Esophagus muscularis mucosa (tissue), 4 donors: ENCODE measurements at regions of chr16 and their contacts with region 1.

Region 1: DNA sequence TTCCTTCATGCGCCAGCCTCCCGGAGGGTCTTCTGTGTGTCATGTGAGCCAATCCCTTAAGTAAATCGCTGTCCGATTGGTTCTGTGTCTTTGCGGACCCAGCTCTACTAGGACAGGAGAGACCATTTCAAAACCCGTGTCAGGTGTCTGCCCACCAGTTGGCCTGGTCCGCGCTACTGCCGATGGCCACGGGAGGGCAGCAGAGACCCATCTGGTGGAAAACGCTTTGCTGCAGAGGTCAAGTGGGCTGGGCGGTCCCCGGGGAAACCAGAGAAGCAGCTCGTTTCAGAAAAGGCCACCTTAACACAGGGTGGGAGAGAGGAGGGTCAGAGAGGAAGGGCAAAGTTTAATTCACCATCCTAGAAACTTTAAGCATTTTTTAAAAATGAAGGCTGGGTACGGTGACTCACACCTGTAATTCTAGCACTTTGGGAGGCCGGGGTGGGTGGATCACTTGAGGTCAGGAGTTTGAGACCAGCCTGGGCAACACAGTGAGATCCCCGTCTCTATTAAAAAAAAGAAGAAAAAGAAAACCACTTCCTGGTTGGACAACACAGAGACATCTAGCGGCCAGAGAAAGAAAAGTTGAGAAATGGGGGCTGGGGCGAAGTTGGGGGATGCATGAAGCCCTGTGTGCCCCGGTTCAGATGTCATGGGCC is 2.8 kb upstream of the CIBAR2 start:
- DNase-seq: peak; percentile 97
- H3K4me3 ChIP-seq: peak overlapping the region; percentile 20 to 28 (median 27)
- H3K27ac ChIP-seq: peak overlapping the region in 2 of 4 donors; percentile 45 to 59
- H3K4me1 ChIP-seq: peaks cover 8 to 11% (median 10%) of the 10 kb centered on the region in 4 donors
- H3K27me3 ChIP-seq: no peaks in the 10 kb centered on the region
- CTCF ChIP-seq: peak; percentile 92 to 98 (median 93)
- EP300 ChIP-seq: no peak
- POLR2A ChIP-seq: no peak

Region 2: DNA sequence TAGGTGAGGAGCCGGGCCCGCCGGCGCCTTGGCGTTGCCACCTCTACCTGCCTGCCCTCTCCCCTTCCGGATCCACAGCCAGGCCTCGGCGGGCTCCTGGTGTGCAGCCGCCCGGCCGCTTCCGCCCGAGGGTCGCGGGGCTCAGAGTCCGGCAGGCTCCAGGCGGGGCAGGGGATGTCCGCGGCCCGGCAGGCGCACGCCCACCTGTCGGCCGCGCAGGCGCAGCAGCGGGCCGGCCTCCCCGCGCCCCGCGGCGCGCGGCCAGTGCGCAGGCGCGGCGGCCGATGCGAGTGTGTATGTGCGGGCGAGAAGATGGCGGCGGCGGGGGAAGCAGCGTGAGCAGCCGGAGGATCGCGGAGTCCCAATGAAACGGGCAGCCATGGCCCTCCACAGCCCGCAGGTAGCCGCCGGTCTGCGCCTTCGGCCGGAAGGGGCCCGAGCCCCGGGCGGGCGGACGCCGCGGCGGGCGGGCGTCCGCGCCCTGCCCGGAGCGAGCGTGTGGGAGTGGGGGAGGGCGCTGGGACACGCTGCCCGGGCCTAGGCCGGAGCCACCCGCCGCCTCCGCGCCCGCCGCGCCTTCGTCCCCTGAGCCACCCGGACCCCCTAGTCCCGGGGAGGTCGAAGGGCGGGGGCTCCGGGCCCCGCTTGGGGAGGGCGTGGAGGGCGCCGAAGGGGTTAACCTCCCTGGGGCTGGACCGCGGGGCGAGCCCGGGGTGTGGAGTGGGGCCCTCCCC is 415.2 kb before region 1 on chr16 and contains the start of gene USP10:
- intact Hi-C with region 1: no loop called
- DNase-seq: no peak
- H3K4me3 ChIP-seq: peak within 1 kb of the TSS; percentile 70 to 99 (median 95)
- H3K27ac ChIP-seq: peak within 1 kb of the TSS; percentile 80 to 89 (median 88)
- H3K4me1 ChIP-seq: peaks cover 16 to 46% (median 40%) of the 10 kb centered on the region in 4 donors
- H3K27me3 ChIP-seq: no peaks in the 10 kb centered on the region
- CTCF ChIP-seq: no peak
- EP300 ChIP-seq: no peak
- POLR2A ChIP-seq: no peak
- total RNA-seq, gene USP10: 45.3 to 71.2 (median 59.3) TPM

Region 3: GRCh38 chr16:84851192-84852127 is 263.6 kb before region 1 on chr16:
- intact Hi-C with region 1: no loop called
- DNase-seq: no peak
- H3K4me3 ChIP-seq: no peak overlapping the region
- H3K27ac ChIP-seq: peak overlapping the region in 2 of 4 donors; percentile 32 to 34
- H3K4me1 ChIP-seq: peaks cover 0 to 11% (median 2%) of the 10 kb centered on the region in 4 donors
- H3K27me3 ChIP-seq: no peaks in the 10 kb centered on the region
- CTCF ChIP-seq: no peak
- EP300 ChIP-seq: no peak
- POLR2A ChIP-seq: no peak

Region 4: GRCh38 chr16:85245307-85246172 is 130.5 kb after region 1 on chr16:
- intact Hi-C with region 1: loop called (anchors 2 kb)
- DNase-seq: no peak
- H3K4me3 ChIP-seq: no peak overlapping the region
- H3K27ac ChIP-seq: no peak overlapping the region
- H3K4me1 ChIP-seq: peaks cover 3 to 21% (median 13%) of the 10 kb centered on the region in 4 donors
- H3K27me3 ChIP-seq: no peaks in the 10 kb centered on the region
- CTCF ChIP-seq: peak; percentile 82 to 97 (median 82)
- EP300 ChIP-seq: no peak
- POLR2A ChIP-seq: no peak